AG04450 (cell line): ENCODE measurements at regions of chr13 and their contacts with region 1.

Region 1: DNA sequence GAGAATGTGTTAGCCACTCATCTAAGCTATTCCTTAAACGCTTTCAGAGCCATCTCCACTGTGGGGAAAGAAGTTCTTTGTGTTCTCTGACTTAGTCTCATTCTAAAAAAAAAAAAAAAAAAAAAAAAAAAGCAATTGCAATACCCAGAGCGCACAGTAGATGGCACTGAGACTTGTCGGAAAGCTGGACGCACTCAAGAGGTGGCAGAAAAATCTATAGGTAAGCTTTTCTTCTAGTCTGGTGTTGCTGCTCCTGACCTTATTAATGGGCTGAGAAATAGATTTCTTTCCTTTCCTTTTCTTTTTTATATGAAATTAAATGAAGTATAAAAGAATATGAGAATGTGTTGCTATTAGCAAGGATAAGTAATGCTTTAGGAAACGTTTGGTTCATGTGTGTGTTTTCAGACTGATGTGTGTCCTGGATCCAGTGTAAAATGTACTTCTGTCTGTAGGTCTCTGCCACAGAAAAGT is 4.7 kb upstream of the GJB2 start:
- DNase-seq: no peak
- H3K4me3 ChIP-seq: no peak overlapping the region
- H3K27ac ChIP-seq: no peak overlapping the region
- H3K27me3 ChIP-seq: peaks cover 56% of the 10 kb centered on the region
- CTCF ChIP-seq: peak; percentile 82

Region 2: GRCh38 chr13:20182231-20182846 is 15.1 kb before region 1 on chr13:
- CTCF ChIA-PET with region 1: interaction called, 22 read pairs
- POLR2A ChIA-PET with region 1: no interaction called
- DNase-seq: peak; percentile 67
- H3K4me3 ChIP-seq: no peak overlapping the region
- H3K27ac ChIP-seq: no peak overlapping the region
- H3K27me3 ChIP-seq: peaks cover 21% of the 10 kb centered on the region
- CTCF ChIP-seq: peak; percentile 91

Region 3: DNA sequence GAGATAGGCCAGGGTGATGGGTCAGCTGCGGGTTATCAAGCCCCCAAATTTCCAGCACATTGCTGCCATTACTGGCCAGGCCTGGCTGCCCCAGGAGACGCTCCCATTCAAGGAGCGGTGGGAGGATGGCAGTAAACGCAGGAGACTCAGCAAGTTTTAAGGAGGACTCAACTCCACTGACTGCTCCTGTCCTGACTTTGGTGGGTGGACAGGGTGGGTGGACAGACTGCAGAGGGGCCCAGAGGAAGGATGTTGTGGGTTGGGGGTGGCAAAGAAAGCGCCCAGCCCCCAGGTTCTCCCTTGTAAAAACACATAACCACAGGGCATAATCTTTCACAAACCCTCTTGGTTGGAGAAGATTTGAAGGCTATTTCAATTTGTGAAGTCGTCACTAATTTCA is 30.3 kb after region 1 on chr13:
- CTCF ChIA-PET with region 1: interaction called, 10 read pairs
- POLR2A ChIA-PET with region 1: no interaction called
- DNase-seq: no peak
- H3K4me3 ChIP-seq: no peak overlapping the region
- H3K27ac ChIP-seq: no peak overlapping the region
- H3K27me3 ChIP-seq: peaks cover 54% of the 10 kb centered on the region
- CTCF ChIP-seq: no peak

Region 4: DNA sequence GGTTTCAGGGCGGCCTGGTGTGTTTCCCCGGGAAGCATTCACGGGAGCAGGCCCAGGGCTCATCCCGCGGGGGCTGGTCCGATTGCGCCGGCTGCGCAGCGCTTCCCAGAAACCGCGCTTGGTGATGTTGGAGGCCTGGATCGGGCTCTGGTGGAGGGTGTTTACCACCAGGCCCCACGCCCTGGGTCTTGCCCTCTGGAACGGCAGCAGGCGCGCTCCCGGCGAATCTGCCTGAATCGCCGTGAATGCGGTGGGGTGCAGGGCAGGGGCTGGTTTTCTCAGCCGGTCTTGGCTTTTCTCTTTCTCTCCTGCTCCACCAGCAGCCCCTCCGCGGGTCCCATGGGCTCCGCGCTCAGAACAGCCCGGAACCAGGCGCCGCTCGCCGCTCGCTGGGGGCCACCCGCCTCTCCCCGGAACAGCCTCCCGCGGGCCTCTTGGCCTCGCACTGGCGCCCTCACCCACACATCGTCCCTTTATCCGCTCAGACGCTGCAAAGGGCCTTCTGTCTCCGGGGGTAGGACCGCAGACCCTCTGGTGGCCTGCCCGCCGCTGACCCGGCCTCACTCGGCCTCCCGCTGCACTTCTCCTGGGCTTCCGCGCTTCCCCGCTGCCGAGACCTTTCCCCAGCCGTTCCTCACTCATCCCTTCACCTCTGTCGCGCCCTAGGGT is 104.1 kb after region 1 on chr13:
- CTCF ChIA-PET with region 1: no interaction called
- POLR2A ChIA-PET with region 1: no interaction called
- DNase-seq: no peak
- H3K4me3 ChIP-seq: no peak overlapping the region
- H3K27ac ChIP-seq: no peak overlapping the region
- H3K27me3 ChIP-seq: peaks cover 53% of the 10 kb centered on the region
- CTCF ChIP-seq: no peak

Region 5: DNA sequence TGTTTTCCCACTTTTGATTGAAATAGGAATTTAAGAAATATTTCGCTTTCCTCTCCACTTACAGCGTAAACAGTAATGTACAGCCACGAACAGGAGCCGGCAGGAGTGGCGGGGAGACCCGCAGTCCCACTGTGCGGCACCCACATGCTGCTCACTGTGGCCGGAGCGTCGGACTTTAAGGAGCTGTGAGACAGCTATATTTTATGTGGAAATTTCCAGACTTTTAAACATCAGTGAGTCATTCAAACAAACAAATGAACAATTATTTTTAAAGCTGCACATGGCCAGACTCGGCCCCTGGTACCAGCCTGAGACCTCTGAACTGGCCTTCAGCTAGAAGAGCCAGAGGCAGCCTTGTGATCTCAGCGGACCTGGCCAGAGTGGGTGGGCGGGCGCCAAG is 275.7 kb after region 1 on chr13:
- CTCF ChIA-PET with region 1: interaction called, 10 read pairs
- POLR2A ChIA-PET with region 1: interaction called, 4 read pairs
- DNase-seq: no peak
- H3K4me3 ChIP-seq: no peak overlapping the region
- H3K27ac ChIP-seq: no peak overlapping the region
- H3K27me3 ChIP-seq: no peaks in the 10 kb centered on the region
- CTCF ChIP-seq: no peak

Region 6: DNA sequence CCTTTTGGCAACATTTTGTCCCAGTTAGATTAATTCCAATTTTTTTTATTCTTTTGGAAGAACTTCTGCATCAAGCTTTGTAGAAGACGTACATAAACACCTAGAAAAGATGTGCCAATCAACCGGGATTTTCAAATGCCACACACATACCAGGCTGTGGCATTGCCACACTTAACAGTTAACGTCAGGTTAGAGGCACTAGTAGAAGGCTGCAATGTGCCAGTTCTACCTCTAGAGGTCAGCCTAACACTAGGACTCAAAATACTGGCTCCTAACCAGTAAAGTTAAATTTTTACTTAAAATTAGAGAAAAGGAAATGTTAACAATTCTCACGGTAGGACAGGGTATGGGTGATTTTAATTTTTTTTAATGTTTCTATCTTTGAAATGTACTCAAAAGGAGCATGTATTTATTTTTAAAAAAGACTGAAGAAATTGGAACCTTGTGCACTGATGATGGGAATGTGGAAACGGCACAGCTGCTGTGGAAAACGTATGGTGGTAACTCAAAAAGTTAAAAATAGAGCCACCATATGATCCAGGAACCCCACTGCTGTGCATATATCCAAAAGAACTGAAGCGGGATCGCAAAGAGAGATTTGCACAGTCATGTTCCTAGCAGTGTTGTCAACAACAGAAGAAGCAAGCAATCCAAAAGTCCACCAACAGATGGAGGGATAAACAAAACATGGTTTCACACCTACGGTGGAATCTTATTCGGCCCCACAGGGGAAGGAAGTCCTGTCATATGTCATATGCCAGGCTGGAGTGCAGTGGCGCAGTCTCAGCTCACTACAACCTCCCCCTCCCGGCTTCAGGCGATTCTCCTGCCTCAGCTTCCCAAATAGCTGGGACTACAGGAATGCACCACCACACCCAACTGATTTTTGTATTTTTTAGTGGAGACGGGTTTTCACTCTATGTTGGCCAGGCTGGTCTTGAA is 298.0 kb after region 1 on chr13:
- CTCF ChIA-PET with region 1: interaction called, 15 read pairs
- POLR2A ChIA-PET with region 1: no interaction called
- DNase-seq: peak; percentile 39
- H3K4me3 ChIP-seq: peak overlapping the region; percentile 25
- H3K27ac ChIP-seq: peak overlapping the region; percentile 65
- H3K27me3 ChIP-seq: no peaks in the 10 kb centered on the region
- CTCF ChIP-seq: peak; percentile 97

Region 7: GRCh38 chr13:20566898-20567874 is 369.8 kb after region 1 on chr13 and contains the start of gene IFT88:
- CTCF ChIA-PET with region 1: interaction called, 16 read pairs
- POLR2A ChIA-PET with region 1: no interaction called
- DNase-seq: peak; percentile 43
- H3K4me3 ChIP-seq: peak within 1 kb of the TSS; percentile 79
- H3K27ac ChIP-seq: peak within 1 kb of the TSS; percentile 87
- H3K27me3 ChIP-seq: no peaks in the 10 kb centered on the region
- CTCF ChIP-seq: no peak
- polyA plus RNA-seq, gene IFT88: 11.0 and 15.8 TPM in 2 replicates

Region 8: GRCh38 chr13:20924758-20925394 is 727.5 kb after region 1 on chr13:
- CTCF ChIA-PET with region 1: interaction called, 26 read pairs
- POLR2A ChIA-PET with region 1: no interaction called
- DNase-seq: peak; percentile 70
- H3K4me3 ChIP-seq: no peak overlapping the region
- H3K27ac ChIP-seq: no peak overlapping the region
- H3K27me3 ChIP-seq: no peaks in the 10 kb centered on the region
- CTCF ChIP-seq: peak; percentile 86